Heart right ventricle (tissue), 16 donors: ENCODE measurements at regions of chr20 and their contacts with region 1.

Region 1: GRCh38 chr20:5886788-5887187 is 63.5 kb downstream of the TRMT6 start:
- DNase-seq: peak; percentile 10 to 24
- ATAC-seq: peak; percentile 57 to 95 (median 84)
- H3K4me3 ChIP-seq: no peak overlapping the region
- H3K27ac ChIP-seq: peak overlapping the region in 9 of 10 donors; percentile 39 to 80 (median 68)
- H3K4me1 ChIP-seq: peaks cover 0 to 14% (median 0%) of the 10 kb centered on the region in 9 donors
- H3K27me3 ChIP-seq: no peaks in the 10 kb centered on the region
- CTCF ChIP-seq: no peak

Region 2: GRCh38 chr20:5714261-5715041 is 172.3 kb before region 1 on chr20:
- intact Hi-C with region 1: no loop called
- DNase-seq: peak in 1 of 2 donors; percentile 32
- ATAC-seq: peak; percentile 75 to 90 (median 80)
- H3K4me3 ChIP-seq: no peak overlapping the region
- H3K27ac ChIP-seq: peak overlapping the region in 9 of 10 donors; percentile 26 to 69 (median 36)
- H3K4me1 ChIP-seq: peaks cover 0 to 40% (median 17%) of the 10 kb centered on the region in 9 donors
- H3K27me3 ChIP-seq: no peaks in the 10 kb centered on the region
- CTCF ChIP-seq: no peak

Region 3: GRCh38 chr20:5822569-5822968 is 64.2 kb before region 1 on chr20:
- intact Hi-C with region 1: loop called in 1 of 10 experiments (anchors 10 kb)
- DNase-seq: no peak
- ATAC-seq: peak in 1 of 8 donors; percentile 19
- H3K4me3 ChIP-seq: no peak overlapping the region
- H3K27ac ChIP-seq: no peak overlapping the region
- H3K4me1 ChIP-seq: peaks cover 0 to 26% (median 14%) of the 10 kb centered on the region in 9 donors
- H3K27me3 ChIP-seq: no peaks in the 10 kb centered on the region
- CTCF ChIP-seq: no peak

Region 4: GRCh38 chr20:5835321-5835821 is 51.4 kb before region 1 on chr20:
- intact Hi-C with region 1: loop called in 2 of 10 experiments (anchors 2 to 10 kb)
- DNase-seq: peak; percentile 21 to 33
- ATAC-seq: peak in 6 of 8 donors; percentile 39 to 81 (median 64)
- H3K4me3 ChIP-seq: no peak overlapping the region
- H3K27ac ChIP-seq: peak overlapping the region; percentile 3 to 86 (median 69)
- H3K4me1 ChIP-seq: peaks cover 10 to 45% (median 18%) of the 10 kb centered on the region in 9 donors
- H3K27me3 ChIP-seq: no peaks in the 10 kb centered on the region
- CTCF ChIP-seq: no peak